Dendritic cell treated with granulocyte-macrophage colony-stimulating factor and Interleukin-4, amounts not matched to agents 40 ng/mL and 50 ng/mL, for 4 days (primary cell): ENCODE measurements at regions of chr1 and their contacts with region 1.

Region 1: GRCh38 chr1:53326088-53326597 is 1.7 kb downstream of the LRP8 start:
- H3K4me3 Mint-ChIP-seq: peak overlapping the region; percentile 91
- H3K27ac Mint-ChIP-seq: peak overlapping the region; percentile 90
- H3K4me1 Mint-ChIP-seq: peaks cover 57% of the 10 kb centered on the region
- H3K27me3 Mint-ChIP-seq: no peaks in the 10 kb centered on the region

Region 2: DNA sequence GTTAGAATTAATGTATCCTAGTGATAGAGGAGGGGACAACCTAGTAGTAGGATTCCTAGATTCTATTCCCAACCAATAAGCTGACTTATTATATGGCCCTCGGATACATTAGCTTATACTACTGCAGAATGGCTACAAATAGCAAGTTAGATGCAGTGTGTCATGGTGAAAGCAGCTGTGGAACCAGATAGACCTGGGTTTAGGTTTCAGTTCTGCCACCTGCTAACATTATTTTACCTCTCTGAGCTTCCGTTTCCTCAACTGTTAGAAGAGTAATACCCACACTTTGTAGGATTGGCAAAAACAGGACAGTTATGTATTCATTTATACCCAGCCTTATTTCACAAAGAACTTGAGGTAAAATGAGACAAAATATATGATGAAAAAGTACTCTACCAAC is 66.2 kb before region 1 on chr1:
- intact Hi-C with region 1: no loop called
- H3K4me3 Mint-ChIP-seq: no peak overlapping the region
- H3K27ac Mint-ChIP-seq: no peak overlapping the region
- H3K4me1 Mint-ChIP-seq: no peaks in the 10 kb centered on the region
- H3K27me3 Mint-ChIP-seq: no peaks in the 10 kb centered on the region

Region 3: GRCh38 chr1:53365437-53366063 is 39.4 kb after region 1 on chr1:
- intact Hi-C with region 1: loop called (anchors 1 kb)
- H3K4me3 Mint-ChIP-seq: peak overlapping the region; percentile 50
- H3K27ac Mint-ChIP-seq: peak overlapping the region; percentile 93
- H3K4me1 Mint-ChIP-seq: peaks cover 78% of the 10 kb centered on the region
- H3K27me3 Mint-ChIP-seq: no peaks in the 10 kb centered on the region

Region 4: DNA sequence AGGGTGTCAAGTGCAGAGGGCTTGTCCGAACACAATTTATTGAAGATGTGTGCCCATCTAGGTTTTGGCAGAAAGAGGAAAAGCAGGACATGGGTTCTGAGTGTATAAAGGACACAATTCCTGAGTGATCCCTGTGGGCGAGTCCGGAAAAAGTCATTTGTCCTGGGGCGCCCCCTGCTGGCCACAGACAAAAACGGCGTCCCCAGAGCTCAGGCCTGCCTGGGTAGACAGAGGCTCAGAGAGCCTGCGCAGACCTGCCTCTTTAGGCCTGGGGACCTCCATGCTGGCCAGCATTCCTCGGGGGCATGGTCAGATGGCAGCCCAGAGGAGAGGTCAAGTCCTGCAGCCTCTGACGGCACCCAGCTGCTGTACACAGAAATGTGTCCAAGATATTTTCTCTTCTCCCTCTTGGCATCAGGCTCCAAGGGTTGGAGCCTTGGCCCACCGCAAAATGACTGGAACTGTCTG is 67.2 kb after region 1 on chr1:
- intact Hi-C with region 1: loop called (anchors 2 kb)
- H3K4me3 Mint-ChIP-seq: no peak overlapping the region
- H3K27ac Mint-ChIP-seq: no peak overlapping the region
- H3K4me1 Mint-ChIP-seq: peaks cover 23% of the 10 kb centered on the region
- H3K27me3 Mint-ChIP-seq: peaks cover 6% of the 10 kb centered on the region